Activated T-helper 2 cell treated with anti-CD3 and anti-CD28 coated beads, Interferon-gamma antibody, Interleukin-2, Interleukin-4, amounts not matched to agents 10 μg/mL and 5 μg/mL and 100 μg/mL, durations not matched to agents 14 hours and 24 hours and 36 hours (primary cell): ENCODE measurements at regions of chr5 and their contacts with region 1.

Region 1: GRCh38 chr5:142748568-142749249 is 21.5 kb upstream of the ARHGAP26 start:
- DNase-seq: no peak
- H3K4me3 Mint-ChIP-seq: no peak overlapping the region
- H3K27ac Mint-ChIP-seq: no peak overlapping the region
- H3K4me1 Mint-ChIP-seq: peaks cover 11% of the 10 kb centered on the region
- H3K27me3 Mint-ChIP-seq: peaks cover 12% of the 10 kb centered on the region

Region 2: DNA sequence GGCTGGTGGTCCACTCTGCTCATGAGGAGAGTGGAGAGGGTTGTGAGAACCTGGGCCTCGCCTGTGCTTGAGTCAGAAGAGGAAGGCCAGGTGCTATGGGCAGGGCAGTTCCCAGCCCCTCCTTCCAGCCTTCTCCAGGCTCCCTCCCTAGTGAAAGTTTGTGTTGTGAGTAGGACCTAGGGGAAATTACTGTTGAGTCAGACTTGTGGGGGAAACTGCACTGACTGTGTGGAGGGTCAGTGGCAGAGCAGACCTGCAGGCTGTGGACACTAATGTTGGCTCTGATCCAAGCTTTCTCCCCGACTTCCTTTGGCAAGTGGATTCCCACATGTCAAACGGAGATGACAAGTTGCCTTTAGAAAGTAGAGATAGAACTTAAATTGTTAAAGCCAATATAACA is 124.1 kb after region 1 on chr5:
- intact Hi-C with region 1: loop called (anchors 1 kb)
- DNase-seq: no peak
- H3K4me3 Mint-ChIP-seq: no peak overlapping the region
- H3K27ac Mint-ChIP-seq: no peak overlapping the region
- H3K4me1 Mint-ChIP-seq: peaks cover 10% of the 10 kb centered on the region
- H3K27me3 Mint-ChIP-seq: no peaks in the 10 kb centered on the region

Region 3: DNA sequence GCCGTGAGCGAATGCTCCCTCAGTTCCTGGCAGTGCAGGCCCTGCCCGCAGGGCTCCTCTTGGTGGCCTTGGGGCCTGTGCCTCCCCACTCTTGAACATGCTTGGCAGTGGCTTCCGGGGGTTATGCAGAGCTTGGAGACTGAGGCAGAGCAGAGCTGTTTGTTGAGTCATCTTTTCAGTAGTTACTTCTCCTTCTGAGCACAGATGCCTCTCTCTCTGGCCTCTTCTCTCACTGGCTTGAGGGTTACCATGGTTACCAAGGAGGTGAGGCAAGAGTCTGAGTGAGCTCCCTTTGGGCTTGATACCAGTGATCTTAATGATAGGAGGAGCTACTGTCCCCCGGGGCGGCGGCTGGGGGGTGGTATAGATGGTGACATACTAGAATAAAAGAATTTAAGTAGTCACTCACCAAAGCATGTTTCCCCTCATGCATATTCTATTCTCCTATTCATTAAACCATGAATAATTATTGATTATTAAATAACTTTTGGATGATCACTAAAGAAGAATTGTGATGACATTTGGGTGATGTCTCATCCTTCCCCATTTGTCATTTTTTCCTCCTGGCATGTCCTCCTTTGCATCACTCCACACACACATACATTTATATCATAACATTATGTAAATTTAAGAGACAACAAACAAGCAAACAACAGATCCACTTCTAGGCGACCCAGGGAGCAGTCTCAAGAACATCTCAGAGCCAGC is 132.5 kb after region 1 on chr5:
- intact Hi-C with region 1: loop called (anchors 1 kb)
- DNase-seq: no peak
- H3K4me3 Mint-ChIP-seq: no peak overlapping the region
- H3K27ac Mint-ChIP-seq: no peak overlapping the region
- H3K4me1 Mint-ChIP-seq: peaks cover 13% of the 10 kb centered on the region
- H3K27me3 Mint-ChIP-seq: no peaks in the 10 kb centered on the region

Region 4: DNA sequence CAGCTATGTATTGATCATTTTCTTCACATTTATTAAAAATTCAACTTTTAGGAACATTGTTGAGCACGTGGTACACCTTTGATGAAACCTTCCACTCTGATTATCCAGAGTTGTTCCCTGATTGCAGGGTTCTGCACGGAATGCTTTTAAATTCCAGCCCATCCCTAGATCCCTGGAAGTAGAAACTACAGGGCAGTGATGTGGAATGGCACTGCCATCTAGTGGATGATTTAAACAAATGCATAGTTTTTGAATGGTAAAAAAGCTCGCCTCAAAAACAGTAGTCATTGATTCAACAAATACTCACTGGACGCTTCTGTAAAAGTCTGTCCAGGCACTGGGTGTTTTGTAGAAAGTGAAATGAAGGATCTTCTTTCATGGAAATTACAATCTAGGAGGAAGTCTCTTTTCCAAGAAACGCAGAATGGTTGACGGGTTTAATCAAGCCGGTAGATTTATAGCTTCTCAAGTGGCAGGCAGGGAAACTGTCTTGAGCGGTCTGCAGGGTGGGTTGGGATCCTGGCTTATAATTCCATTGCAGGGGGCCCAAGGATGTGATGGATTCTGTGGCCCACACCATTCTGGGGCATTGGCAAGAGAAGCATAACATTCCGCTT is 139.9 kb after region 1 on chr5:
- intact Hi-C with region 1: loop called (anchors 2 kb)
- DNase-seq: no peak
- H3K4me3 Mint-ChIP-seq: no peak overlapping the region
- H3K27ac Mint-ChIP-seq: no peak overlapping the region
- H3K4me1 Mint-ChIP-seq: peaks cover 15% of the 10 kb centered on the region
- H3K27me3 Mint-ChIP-seq: no peaks in the 10 kb centered on the region